ENCODE measurements at regions of chr5 and their contacts with region 1.

Region 1: DNA sequence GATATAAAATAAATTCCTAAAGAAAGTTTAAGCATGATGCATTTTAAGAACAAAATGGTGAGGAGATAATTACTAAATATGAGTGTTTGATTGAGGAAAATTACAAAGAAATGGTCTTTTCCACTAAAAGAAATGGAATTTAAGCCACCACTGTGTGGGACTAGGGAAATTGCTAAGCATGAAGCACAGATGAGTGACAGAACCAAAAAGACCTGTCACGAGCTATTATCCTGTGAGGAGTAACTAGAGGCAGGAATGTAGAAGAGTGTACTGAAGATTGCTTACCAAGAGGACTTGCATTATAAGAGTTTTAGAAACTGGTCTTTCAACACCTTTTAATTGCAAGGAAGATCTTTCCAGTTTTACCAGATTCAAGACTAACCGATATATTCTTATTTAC is 193.6 kb upstream of the PRR16 start:
- DNase-seq: no peak
- H3K4me3 ChIP-seq: no peak overlapping the region
- H3K27ac ChIP-seq: no peak overlapping the region
- H3K4me1 ChIP-seq: no peaks in the 10 kb centered on the region
- H3K27me3 ChIP-seq: no peaks in the 10 kb centered on the region
- CTCF ChIP-seq: no peak
- POLR2A ChIP-seq: no peak

Region 2: DNA sequence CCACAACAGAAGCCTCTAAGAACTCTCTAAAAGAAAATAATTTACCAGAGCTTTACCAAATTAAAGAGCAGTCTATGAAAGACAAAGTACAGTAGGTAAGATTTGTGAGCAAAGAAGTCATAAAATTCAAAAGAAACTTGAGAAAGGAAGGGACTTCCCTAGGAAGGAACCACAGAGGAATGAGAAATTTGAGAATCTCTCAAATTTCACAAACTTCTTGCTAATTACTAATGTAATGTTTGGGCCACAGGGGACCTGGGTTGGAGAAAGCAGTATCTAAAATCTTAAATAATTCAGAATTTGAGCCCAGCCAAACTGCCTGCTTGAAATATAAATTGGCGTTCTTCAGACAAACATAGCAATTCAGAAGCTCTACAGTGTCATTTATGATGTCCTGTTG is 31.4 kb before region 1 on chr5:
- intact Hi-C with region 1: loop called (anchors 2 kb)
- DNase-seq: no peak
- H3K4me3 ChIP-seq: no peak overlapping the region
- H3K27ac ChIP-seq: no peak overlapping the region
- H3K4me1 ChIP-seq: no peaks in the 10 kb centered on the region
- H3K27me3 ChIP-seq: no peaks in the 10 kb centered on the region
- CTCF ChIP-seq: no peak
- POLR2A ChIP-seq: no peak